ENCODE measurements at regions of chr5 and their contacts with region 1.

Region 1: GRCh38 chr5:51382763-51383490 is at the start of gene ISL1:
- DNase-seq: no peak
- ATAC-seq: no peak
- H3K4me3 ChIP-seq: no peak within 1 kb of the TSS
- H3K4me3 Mint-ChIP-seq: peak within 1 kb of the TSS in 1 of 10 donors; percentile 45
- H3K27ac ChIP-seq: no peak within 1 kb of the TSS
- H3K27ac Mint-ChIP-seq: peak within 1 kb of the TSS in 2 of 9 donors; percentile 65 to 75
- H3K4me1 ChIP-seq: no peaks in the 10 kb centered on the region
- H3K4me1 Mint-ChIP-seq: peaks cover 4 to 22% (median 11%) of the 10 kb centered on the region in 7 donors
- H3K27me3 ChIP-seq: peaks cover 0 to 29% of the 10 kb centered on the region in 2 donors
- H3K27me3 Mint-ChIP-seq: peaks cover 92 to 98% (median 94%) of the 10 kb centered on the region in 5 donors
- total RNA-seq, gene ISL1: not detected

Region 2: GRCh38 chr5:51398875-51399642 is 16.1 kb after region 1 on chr5:
- CTCF ChIA-PET with region 1: no interaction called
- POLR2A ChIA-PET with region 1: no interaction called
- intact Hi-C with region 1: loop called in 1 of 2 experiments (anchors 2 kb)
- DNase-seq: no peak
- ATAC-seq: no peak
- H3K4me3 ChIP-seq: no peak overlapping the region
- H3K4me3 Mint-ChIP-seq: no peak overlapping the region
- H3K27ac ChIP-seq: no peak overlapping the region
- H3K27ac Mint-ChIP-seq: peak overlapping the region in 1 of 9 donors; percentile 46
- H3K4me1 ChIP-seq: no peaks in the 10 kb centered on the region
- H3K4me1 Mint-ChIP-seq: no peaks in the 10 kb centered on the region
- H3K27me3 ChIP-seq: no peaks in the 10 kb centered on the region
- H3K27me3 Mint-ChIP-seq: peaks cover 56 to 74% (median 62%) of the 10 kb centered on the region in 5 donors

Region 3: DNA sequence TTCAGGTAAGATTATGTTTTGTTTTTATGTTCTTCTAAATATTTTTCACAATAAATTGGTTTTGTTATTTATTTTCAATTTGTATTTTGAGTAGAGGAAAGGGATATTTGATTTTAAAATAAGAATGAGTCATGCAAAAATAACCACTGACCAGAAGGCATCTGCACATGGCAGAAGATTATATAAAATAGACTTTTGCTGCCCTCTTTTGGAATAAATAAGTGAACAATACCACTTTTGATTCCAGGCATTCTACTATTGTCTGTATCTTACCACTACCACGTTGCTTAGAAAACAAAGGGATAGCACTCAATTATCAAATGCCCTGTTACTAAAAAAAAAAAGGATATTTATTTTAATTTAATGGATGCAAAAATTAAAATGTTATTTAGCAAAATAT is 1177.4 kb after region 1 on chr5:
- CTCF ChIA-PET with region 1: no interaction called
- POLR2A ChIA-PET with region 1: no interaction called
- intact Hi-C with region 1: loop called in 1 of 2 experiments (anchors 2 kb)
- DNase-seq: no peak
- ATAC-seq: no peak
- H3K4me3 ChIP-seq: no peak overlapping the region
- H3K4me3 Mint-ChIP-seq: no peak overlapping the region
- H3K27ac ChIP-seq: no peak overlapping the region
- H3K27ac Mint-ChIP-seq: no peak overlapping the region
- H3K4me1 ChIP-seq: no peaks in the 10 kb centered on the region
- H3K4me1 Mint-ChIP-seq: peaks cover 0 to 1% (median 0%) of the 10 kb centered on the region in 7 donors
- H3K27me3 ChIP-seq: peaks cover 0 to 4% of the 10 kb centered on the region in 2 donors
- H3K27me3 Mint-ChIP-seq: peaks cover 5 to 21% (median 17%) of the 10 kb centered on the region in 5 donors

Region 4: GRCh38 chr5:52657247-52657645 is 1274.3 kb after region 1 on chr5:
- CTCF ChIA-PET with region 1: no interaction called
- POLR2A ChIA-PET with region 1: no interaction called
- intact Hi-C with region 1: loop called in 1 of 2 experiments (anchors 2 kb)
- DNase-seq: peak in 6 of 9 donors; percentile 14 to 61 (median 50)
- ATAC-seq: peak; percentile 57
- H3K4me3 ChIP-seq: no peak overlapping the region
- H3K4me3 Mint-ChIP-seq: no peak overlapping the region
- H3K27ac ChIP-seq: no peak overlapping the region
- H3K27ac Mint-ChIP-seq: no peak overlapping the region
- H3K4me1 ChIP-seq: no peaks in the 10 kb centered on the region
- H3K4me1 Mint-ChIP-seq: peaks cover 0 to 6% (median 0%) of the 10 kb centered on the region in 7 donors
- H3K27me3 ChIP-seq: no peaks in the 10 kb centered on the region
- H3K27me3 Mint-ChIP-seq: peaks cover 7 to 40% (median 11%) of the 10 kb centered on the region in 5 donors

Region 5: DNA sequence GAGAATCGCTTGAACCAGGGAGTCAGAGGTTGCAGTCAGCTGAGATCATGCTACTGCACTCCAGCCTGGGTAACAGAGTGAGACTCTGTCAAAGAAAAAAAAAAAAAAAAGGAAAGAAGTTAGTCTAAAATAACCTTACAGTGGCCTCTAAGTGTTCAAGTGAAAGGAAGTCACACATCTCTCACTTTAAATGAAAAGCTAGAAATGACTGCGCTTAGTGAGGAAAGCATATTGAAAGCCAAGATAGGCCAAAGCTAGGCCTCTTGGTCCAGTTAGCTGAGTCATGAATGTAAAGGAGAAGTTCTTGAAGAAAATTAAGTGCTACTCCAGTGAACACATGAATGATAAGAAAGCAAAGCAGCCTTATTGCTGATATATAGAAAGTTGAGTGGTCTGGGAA is 1442.9 kb after region 1 on chr5:
- CTCF ChIA-PET with region 1: no interaction called
- POLR2A ChIA-PET with region 1: no interaction called
- intact Hi-C with region 1: no loop called
- DNase-seq: no peak
- ATAC-seq: peak; percentile 51
- H3K4me3 ChIP-seq: no peak overlapping the region
- H3K4me3 Mint-ChIP-seq: no peak overlapping the region
- H3K27ac ChIP-seq: no peak overlapping the region
- H3K27ac Mint-ChIP-seq: peak overlapping the region in 2 of 9 donors; percentile 18 to 23
- H3K4me1 ChIP-seq: no peaks in the 10 kb centered on the region
- H3K4me1 Mint-ChIP-seq: peaks cover 4 to 10% (median 7%) of the 10 kb centered on the region in 7 donors
- H3K27me3 ChIP-seq: no peaks in the 10 kb centered on the region
- H3K27me3 Mint-ChIP-seq: no peaks in the 10 kb centered on the region

Measured in naive thymus-derived CD4-positive, alpha-beta T cell (primary cell).